ENCODE measurements at regions of chr14 and their contacts with region 1.

Region 1: GRCh38 chr14:24431569-24432258 is 2.0 kb downstream of the KHNYN start:
- DNase-seq: peak; percentile 92
- ATAC-seq: peak; percentile 58 to 72

Region 2: GRCh38 chr14:24332268-24332993 is 99.3 kb before region 1 on chr14:
- intact Hi-C with region 1: loop called (anchors 2 to 5 kb)
- DNase-seq: peak; percentile 74
- ATAC-seq: peak; percentile 55 to 67

Region 3: GRCh38 chr14:24366721-24367513 is 64.8 kb before region 1 on chr14:
- intact Hi-C with region 1: loop called (anchors 2 to 5 kb)
- DNase-seq: peak; percentile 89
- ATAC-seq: peak; percentile 54 to 81

Region 4: DNA sequence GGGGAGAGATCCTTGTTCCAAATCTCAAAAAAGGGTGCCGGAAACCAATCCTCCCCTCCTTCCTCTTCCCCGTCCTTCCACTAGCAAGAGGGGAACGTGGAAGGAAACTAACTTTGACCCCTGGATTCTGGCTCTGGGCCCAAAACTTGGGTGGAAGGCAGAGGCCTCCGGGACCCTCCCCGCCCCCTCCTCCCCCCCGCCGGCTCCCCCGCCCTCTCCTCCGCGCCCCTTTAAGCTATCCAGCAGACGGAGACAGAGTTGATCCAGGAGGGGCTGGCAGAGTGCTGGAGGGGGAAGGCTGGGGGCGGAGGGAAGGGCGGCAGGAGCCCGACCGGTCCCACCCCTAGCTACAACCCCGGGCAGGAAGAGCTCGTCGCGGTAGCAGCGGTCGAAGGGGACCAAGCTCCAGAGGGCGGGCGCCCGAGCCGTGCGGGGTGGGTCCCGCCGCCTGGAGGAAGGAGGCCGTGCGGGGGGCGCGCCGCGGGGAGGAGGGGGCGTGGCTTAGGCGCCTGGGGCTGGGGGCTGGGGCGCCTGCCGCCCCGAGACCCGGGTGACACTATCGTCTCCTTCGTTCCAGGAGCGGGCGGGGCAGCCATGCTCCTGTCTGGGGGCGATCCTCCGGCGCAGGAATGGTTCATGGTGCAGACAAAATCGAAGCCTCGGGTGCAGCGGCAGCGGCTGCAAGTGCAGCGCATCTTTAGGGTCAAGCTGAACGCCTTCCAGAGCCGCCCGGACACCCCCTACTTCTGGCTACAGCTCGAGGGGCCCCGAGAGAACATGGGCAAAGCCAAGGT is 32.9 kb before region 1 on chr14 and contains the start of gene NYNRIN:
- intact Hi-C with region 1: no loop called
- DNase-seq: peak; percentile 74
- ATAC-seq: peak; percentile 87 to 88
- total RNA-seq, gene NYNRIN: 6.5 to 12.0 TPM